ENCODE measurements at regions of chr19 and their contacts with region 1.

Region 1: DNA sequence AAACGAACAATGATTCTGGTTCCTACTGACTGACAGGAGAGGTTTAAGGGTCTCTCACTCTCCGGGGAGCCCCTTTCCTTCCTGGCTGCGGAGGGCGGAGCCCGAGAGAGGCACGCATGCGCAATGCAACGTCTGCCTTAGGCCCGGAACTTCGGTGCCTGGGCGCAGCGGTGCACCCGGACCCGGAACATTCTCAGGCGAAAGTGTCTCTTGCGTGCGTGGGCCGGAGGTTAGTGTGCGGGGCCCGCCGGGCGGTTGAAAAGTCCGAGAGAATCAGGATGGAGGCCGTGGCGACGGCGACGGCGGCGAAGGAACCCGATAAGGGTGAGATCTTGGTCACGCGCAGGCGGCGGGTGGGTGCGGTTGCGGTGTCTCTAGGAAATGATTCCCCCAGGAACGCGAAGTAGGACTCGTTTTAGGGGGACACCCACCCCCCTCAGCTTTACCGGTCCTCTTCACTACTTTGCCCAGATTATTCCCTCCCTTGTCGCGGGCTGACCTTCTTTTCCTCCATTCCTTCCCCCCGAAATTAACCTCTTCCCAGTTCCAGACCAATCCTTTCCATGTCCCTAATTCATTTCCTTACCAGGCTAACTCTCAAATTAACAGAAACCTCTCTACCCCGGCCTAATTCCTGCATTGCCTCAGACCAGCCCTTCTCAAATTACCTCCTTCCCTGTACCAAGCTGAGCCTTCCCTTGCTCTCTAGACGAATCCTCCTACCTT is at the start of gene CCDC97:
- DNase-seq: peak; percentile 82 to 97 (median 90)
- ATAC-seq: peak; percentile 67 to 69
- H3K4me3 Mint-ChIP-seq: peak within 1 kb of the TSS; percentile 93 to 99 (median 97)
- H3K27ac Mint-ChIP-seq: peak within 1 kb of the TSS; percentile 94 to 100 (median 99)
- H3K4me1 Mint-ChIP-seq: peaks cover 34 to 86% (median 82%) of the 10 kb centered on the region in 4 donors
- H3K27me3 Mint-ChIP-seq: peaks cover 0 to 3% (median 0%) of the 10 kb centered on the region in 5 donors
- polyA plus RNA-seq, gene CCDC97: 15.6 to 25.0 (median 24.6) TPM

Region 2: GRCh38 chr19:41206926-41207750 is 103.1 kb before region 1 on chr19:
- POLR2A ChIA-PET with region 1: interaction called, 56 read pairs
- DNase-seq: peak in 1 of 10 donors; percentile 56
- ATAC-seq: no peak
- H3K4me3 Mint-ChIP-seq: no peak overlapping the region
- H3K27ac Mint-ChIP-seq: peak overlapping the region in 3 of 10 donors; percentile 60 to 82 (median 78)
- H3K4me1 Mint-ChIP-seq: peaks cover 0 to 6% (median 4%) of the 10 kb centered on the region in 4 donors
- H3K27me3 Mint-ChIP-seq: peaks cover 0 to 2% (median 0%) of the 10 kb centered on the region in 5 donors

Region 3: GRCh38 chr19:41217741-41218140 is 92.5 kb before region 1 on chr19:
- POLR2A ChIA-PET with region 1: no interaction called
- DNase-seq: no peak
- ATAC-seq: no peak
- H3K4me3 Mint-ChIP-seq: no peak overlapping the region
- H3K27ac Mint-ChIP-seq: peak overlapping the region in 1 of 10 donors; percentile 60
- H3K4me1 Mint-ChIP-seq: peaks cover 0 to 19% (median 7%) of the 10 kb centered on the region in 4 donors
- H3K27me3 Mint-ChIP-seq: peaks cover 13 to 64% (median 36%) of the 10 kb centered on the region in 5 donors

Region 4: GRCh38 chr19:41298348-41298964 is 11.7 kb before region 1 on chr19:
- POLR2A ChIA-PET with region 1: interaction called, 11 read pairs
- DNase-seq: peak in 6 of 10 donors; percentile 40 to 70 (median 52)
- ATAC-seq: peak; percentile 34 to 42
- H3K4me3 Mint-ChIP-seq: peak overlapping the region in 9 of 10 donors; percentile 5 to 64 (median 52)
- H3K27ac Mint-ChIP-seq: peak overlapping the region; percentile 82 to 99 (median 92)
- H3K4me1 Mint-ChIP-seq: peaks cover 50 to 86% (median 78%) of the 10 kb centered on the region in 4 donors
- H3K27me3 Mint-ChIP-seq: no peaks in the 10 kb centered on the region

Region 5: GRCh38 chr19:41327576-41328156 is 17.5 kb after region 1 on chr19:
- POLR2A ChIA-PET with region 1: interaction called, 27 read pairs
- DNase-seq: peak; percentile 60 to 90 (median 74)
- ATAC-seq: peak; percentile 62 to 75
- H3K4me3 Mint-ChIP-seq: peak overlapping the region; percentile 75 to 88 (median 82)
- H3K27ac Mint-ChIP-seq: peak overlapping the region; percentile 93 to 99 (median 98)
- H3K4me1 Mint-ChIP-seq: peaks cover 54 to 89% (median 75%) of the 10 kb centered on the region in 4 donors
- H3K27me3 Mint-ChIP-seq: peaks cover 0 to 2% (median 0%) of the 10 kb centered on the region in 5 donors

Region 6: DNA sequence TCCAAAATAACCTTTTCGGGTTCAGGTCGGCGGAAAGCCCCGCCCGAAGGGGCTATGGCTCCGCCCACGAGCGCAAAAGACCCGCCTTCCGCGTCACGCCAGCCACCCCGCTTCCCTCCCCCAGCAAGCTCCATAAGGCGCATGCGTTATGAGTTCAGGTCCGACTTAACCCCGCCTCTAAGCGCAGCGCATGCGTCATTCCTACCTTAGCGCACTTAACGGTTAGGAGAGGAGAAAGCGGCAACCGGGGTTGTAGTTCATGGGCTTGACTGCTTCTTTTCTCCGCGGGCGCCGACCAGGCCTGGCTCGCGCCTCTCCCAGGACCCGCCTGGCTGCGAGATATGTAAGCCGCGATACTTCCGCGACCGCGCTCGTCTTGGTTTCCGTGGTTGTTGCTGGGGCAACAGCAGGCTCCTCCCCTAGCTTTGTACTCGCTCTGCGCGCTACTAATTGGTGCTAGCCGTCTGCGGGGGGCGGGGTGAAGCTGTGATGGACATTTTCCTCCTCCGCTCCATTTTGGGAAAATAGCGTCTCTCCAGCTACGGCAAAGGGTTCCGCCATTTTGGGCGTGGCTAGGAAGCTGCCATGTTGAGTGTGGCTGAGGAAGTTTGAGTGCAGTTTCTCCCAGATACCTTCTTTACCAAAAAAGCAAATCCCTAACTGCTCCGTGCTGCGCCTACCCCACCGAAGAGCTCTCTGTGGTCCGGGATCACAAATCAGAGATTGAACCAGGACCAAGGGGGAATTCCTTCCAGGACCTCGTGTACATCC is 53.7 kb after region 1 on chr19 and contains the start of gene B9D2:
- POLR2A ChIA-PET with region 1: interaction called, 180 read pairs
- DNase-seq: peak; percentile 91 to 100 (median 98)
- ATAC-seq: peak; percentile 93 to 94
- H3K4me3 Mint-ChIP-seq: peak within 1 kb of the TSS; percentile 89 to 97 (median 94)
- H3K27ac Mint-ChIP-seq: peak within 1 kb of the TSS; percentile 99 to 100 (median 100)
- H3K4me1 Mint-ChIP-seq: peaks cover 12 to 57% (median 40%) of the 10 kb centered on the region in 4 donors
- H3K27me3 Mint-ChIP-seq: no peaks in the 10 kb centered on the region
- polyA plus RNA-seq, gene B9D2: 12.6 to 20.9 (median 19.8) TPM